ENCODE measurements at regions of chr2 and their contacts with region 1.

Region 1: GRCh38 chr2:142130111-142131009 is 456 bp downstream of the LRP1B start:
- DNase-seq: no peak
- H3K4me3 ChIP-seq: peak overlapping the region; percentile 55
- CTCF ChIP-seq: no peak

Region 2: GRCh38 chr2:142140434-142140845 is 10.1 kb after region 1 on chr2:
- CTCF ChIA-PET with region 1: interaction called, 10 read pairs
- POLR2A ChIA-PET with region 1: no interaction called
- DNase-seq: no peak
- H3K4me3 ChIP-seq: no peak overlapping the region
- CTCF ChIP-seq: no peak